ENCODE measurements at regions of chr5 and their contacts with region 1.

Region 1: DNA sequence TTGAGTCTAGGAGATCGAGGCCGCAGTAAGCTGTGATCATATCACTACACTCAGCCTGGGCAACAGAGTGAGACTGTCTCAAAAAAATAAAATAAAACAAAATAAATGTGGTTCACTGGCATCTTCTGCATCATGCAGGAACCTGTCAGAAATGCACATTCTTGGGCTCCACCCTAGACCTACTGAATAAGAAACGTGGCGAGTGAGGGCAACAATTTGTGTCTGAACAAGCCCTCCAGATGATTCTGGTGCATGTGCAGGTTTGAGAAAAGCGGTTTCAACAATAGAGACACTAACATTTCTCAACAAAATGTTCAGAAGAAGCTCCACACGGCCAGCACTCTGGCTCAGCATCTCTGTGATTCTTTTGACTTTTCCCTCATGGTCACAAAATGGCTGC is 42.8 kb upstream of the CPEB4 start:
- DNase-seq: no peak
- H3K4me3 ChIP-seq: no peak overlapping the region
- H3K27ac ChIP-seq: no peak overlapping the region
- H3K4me1 ChIP-seq: no peaks in the 10 kb centered on the region
- CTCF ChIP-seq: no peak

Region 2: DNA sequence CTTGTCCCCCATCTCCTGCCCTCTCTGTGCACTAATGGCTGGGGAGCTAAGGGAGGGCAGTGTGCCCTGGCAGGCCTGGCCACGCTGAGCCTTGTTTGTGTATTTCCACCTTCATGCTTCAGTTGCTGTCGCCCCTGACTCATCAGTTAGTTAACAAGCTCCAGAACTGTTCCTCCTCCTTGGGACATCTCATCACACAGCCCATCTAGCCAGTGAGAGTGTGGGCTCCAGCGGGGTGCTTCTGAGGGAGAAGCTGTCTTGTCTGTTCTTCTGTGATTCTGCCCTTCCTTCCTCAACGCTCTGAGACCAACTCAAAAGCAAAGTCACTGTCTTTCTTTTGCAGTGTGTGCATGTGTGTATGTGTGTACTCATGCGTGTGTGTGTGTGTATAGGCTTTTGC is 15.5 kb before region 1 on chr5:
- CTCF ChIA-PET with region 1: interaction called, 3 read pairs
- POLR2A ChIA-PET with region 1: interaction called, 25 read pairs
- intact Hi-C with region 1: no loop called
- DNase-seq: peak; percentile 80
- H3K4me3 ChIP-seq: peak overlapping the region; percentile 32
- H3K27ac ChIP-seq: peak overlapping the region; percentile 75
- H3K4me1 ChIP-seq: peaks cover 88% of the 10 kb centered on the region
- CTCF ChIP-seq: no peak

Region 3: GRCh38 chr5:173855162-173855994 is 10.1 kb after region 1 on chr5:
- CTCF ChIA-PET with region 1: no interaction called
- POLR2A ChIA-PET with region 1: interaction called, 18 read pairs
- intact Hi-C with region 1: no loop called
- DNase-seq: no peak
- H3K4me3 ChIP-seq: no peak overlapping the region
- H3K27ac ChIP-seq: no peak overlapping the region
- H3K4me1 ChIP-seq: peaks cover 12% of the 10 kb centered on the region
- CTCF ChIP-seq: no peak

Measured in OCI-LY7 (cell line).